HCT116 (cell line): ENCODE measurements at regions of chr15 and their contacts with region 1.

Region 1: DNA sequence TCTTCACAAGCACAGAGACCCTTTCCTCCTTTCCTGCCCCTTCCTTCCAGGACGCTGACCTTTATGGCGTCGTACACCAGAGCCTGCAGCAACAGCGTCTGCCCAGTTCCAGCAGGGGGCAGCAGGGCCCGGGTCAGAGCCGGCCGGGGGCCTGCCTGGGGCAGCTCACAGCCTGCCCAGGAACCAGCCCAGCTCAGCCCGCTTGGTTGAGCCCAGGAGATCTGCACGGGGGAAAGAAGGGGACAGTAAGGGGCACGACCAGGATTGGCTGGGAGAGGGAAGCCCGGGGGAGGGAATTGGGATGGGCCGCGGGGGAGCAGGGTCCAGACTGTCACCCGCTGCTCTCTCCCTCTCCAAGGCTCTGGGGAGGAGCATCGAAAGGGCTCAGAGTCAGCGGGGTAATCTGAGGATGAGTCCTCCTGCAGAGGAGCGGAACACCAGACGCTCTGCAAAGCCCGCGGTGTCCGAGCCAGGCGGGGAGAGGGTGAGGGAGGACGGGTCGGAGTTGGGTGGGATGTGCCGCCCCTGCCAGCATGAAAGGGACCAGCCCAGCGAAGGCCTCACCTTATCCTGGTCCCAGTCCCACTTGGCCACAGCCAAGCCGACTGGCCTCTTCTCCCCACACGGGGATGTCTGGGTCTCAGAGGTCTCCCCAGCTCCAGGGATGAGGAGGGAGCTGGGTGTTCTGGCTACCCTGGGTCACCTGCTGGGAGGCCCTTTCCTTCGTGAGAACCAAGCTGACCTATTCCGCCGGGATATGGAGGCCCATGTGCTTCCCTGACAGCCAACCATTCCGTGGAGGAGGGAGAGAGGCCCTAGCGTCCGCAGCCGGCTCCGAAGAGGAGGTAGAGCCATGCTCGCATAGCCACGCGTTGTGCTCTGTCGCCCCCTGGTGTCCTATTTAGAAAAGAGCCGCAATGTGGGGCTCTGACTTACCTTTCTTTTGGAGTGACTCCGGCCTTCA is 7.4 kb upstream of the IGDCC3 start:
- DNase-seq: peak; percentile 74
- ATAC-seq: peak; percentile 87
- H3K4me3 ChIP-seq: peak overlapping the region; percentile 39 to 59
- H3K27ac ChIP-seq: peak overlapping the region; percentile 70
- H3K4me1 ChIP-seq: peaks cover 8 to 21% of the 10 kb centered on the region in 2 experiments
- H3K27me3 ChIP-seq: no peaks in the 10 kb centered on the region; the same call in 1 of the 2 replicates
- CTCF ChIP-seq: peak; percentile 88 to 97 (median 93)
- POLR2A ChIP-seq: no peak
- RAD21 ChIP-seq: peak; percentile 93

Region 2: GRCh38 chr15:64443747-64444621 is 941.2 kb before region 1 on chr15:
- CTCF ChIA-PET with region 1: no interaction called
- POLR2A ChIA-PET with region 1: no interaction called
- RAD21 ChIA-PET with region 1: no interaction called
- intact Hi-C with region 1: no loop called
- DNase-seq: peak; percentile 81
- ATAC-seq: peak; percentile 89
- H3K4me3 ChIP-seq: peak overlapping the region; percentile 12 to 50
- H3K27ac ChIP-seq: peak overlapping the region; percentile 81
- H3K4me1 ChIP-seq: peaks cover 22 to 29% of the 10 kb centered on the region in 2 experiments
- H3K27me3 ChIP-seq: no peaks in the 10 kb centered on the region
- CTCF ChIP-seq: 0 out of 6 replicates have a peak, but pooled peaks of 1 of the 3 experiments have one; percentile 3
- POLR2A ChIP-seq: no peak
- RAD21 ChIP-seq: peak; percentile 2; the same call in 1 of the 2 replicates

Region 3: GRCh38 chr15:65400760-65401610 is 15.8 kb after region 1 on chr15:
- CTCF ChIA-PET with region 1: interaction called, 17 read pairs
- POLR2A ChIA-PET with region 1: interaction called, 3 read pairs
- RAD21 ChIA-PET with region 1: no interaction called
- intact Hi-C with region 1: no loop called
- DNase-seq: peak; percentile 56
- ATAC-seq: peak; percentile 95
- H3K4me3 ChIP-seq: no peak overlapping the region
- H3K27ac ChIP-seq: no peak overlapping the region
- H3K4me1 ChIP-seq: peaks cover 6 to 20% of the 10 kb centered on the region in 2 experiments
- H3K27me3 ChIP-seq: no peaks in the 10 kb centered on the region
- CTCF ChIP-seq: peak; percentile 73 to 96 (median 80); a peak in 5 of 6 replicates
- POLR2A ChIP-seq: no peak
- RAD21 ChIP-seq: peak; percentile 85